ENCODE measurements at regions of chr1 and their contacts with region 1.

Region 1: DNA sequence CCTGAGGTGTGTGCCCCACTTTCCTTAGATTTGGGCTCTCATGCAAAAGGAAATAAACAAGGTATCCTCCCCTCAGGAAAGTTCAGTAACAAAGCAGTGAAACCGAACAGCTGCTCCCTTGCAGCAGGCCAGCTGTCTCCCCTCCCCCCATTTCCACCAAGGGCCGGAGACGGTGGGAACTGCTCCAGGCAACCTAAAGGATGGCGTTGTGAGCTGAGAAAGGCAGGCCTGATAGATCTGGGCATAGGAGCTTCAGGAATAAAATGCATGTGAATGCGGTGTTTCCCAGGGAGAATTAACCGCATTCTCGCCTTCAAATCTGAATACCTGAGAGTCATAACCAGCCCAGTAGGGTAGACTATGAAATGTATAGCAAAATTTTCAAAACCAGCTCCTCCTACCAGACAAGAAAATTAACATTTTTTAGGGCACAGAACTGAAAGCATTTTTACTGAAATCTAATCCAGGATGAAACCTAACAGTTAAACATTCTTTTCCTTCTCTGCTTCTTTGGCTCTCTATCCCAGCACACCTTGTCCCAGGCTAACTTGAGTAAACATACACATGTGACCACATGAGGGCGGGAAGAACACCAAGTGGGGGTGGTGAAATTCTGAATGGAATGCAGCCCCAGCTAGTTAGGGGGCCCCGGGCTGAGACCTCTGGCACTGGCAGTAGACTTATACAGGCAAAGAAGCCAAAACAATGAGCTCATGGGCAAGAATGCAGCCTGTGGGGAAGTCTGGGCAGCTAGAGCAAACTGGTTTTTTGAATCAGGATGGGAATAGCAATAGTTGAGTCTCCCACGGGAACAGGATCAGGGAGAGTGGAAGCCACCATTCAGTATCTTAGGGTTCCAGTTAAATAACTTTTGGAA is 11.5 kb downstream of the MCL1 start:
- DNase-seq: peak; percentile 72
- H3K4me3 Mint-ChIP-seq: peak overlapping the region; percentile 72
- H3K27ac Mint-ChIP-seq: peak overlapping the region; percentile 97
- H3K4me1 Mint-ChIP-seq: peaks cover 91% of the 10 kb centered on the region
- H3K27me3 Mint-ChIP-seq: no peaks in the 10 kb centered on the region

Region 2: GRCh38 chr1:150363426-150364230 is 204.3 kb before region 1 on chr1 and contains the start of gene RPRD2:
- CTCF ChIA-PET with region 1: no interaction called
- POLR2A ChIA-PET with region 1: no interaction called
- DNase-seq: peak; percentile 100
- H3K4me3 Mint-ChIP-seq: peak within 1 kb of the TSS; percentile 97
- H3K27ac Mint-ChIP-seq: peak within 1 kb of the TSS; percentile 98
- H3K4me1 Mint-ChIP-seq: peaks cover 29% of the 10 kb centered on the region
- H3K27me3 Mint-ChIP-seq: no peaks in the 10 kb centered on the region
- total RNA-seq, gene RPRD2: 36.4 to 43.6 TPM

Region 3: GRCh38 chr1:150578965-150579798 is 11.2 kb after region 1 on chr1 and contains the start of gene MCL1:
- CTCF ChIA-PET with region 1: interaction called, 158 read pairs
- POLR2A ChIA-PET with region 1: interaction called, 50 read pairs
- DNase-seq: peak; percentile 93
- H3K4me3 Mint-ChIP-seq: peak within 1 kb of the TSS; percentile 99
- H3K27ac Mint-ChIP-seq: peak within 1 kb of the TSS; percentile 98
- H3K4me1 Mint-ChIP-seq: peaks cover 25% of the 10 kb centered on the region
- H3K27me3 Mint-ChIP-seq: no peaks in the 10 kb centered on the region
- total RNA-seq, gene MCL1: 260 to 311 TPM

Region 4: GRCh38 chr1:150696590-150697524 is 128.9 kb after region 1 on chr1 and contains the start of gene GOLPH3L:
- CTCF ChIA-PET with region 1: no interaction called
- POLR2A ChIA-PET with region 1: no interaction called
- DNase-seq: peak; percentile 97
- H3K4me3 Mint-ChIP-seq: peak within 1 kb of the TSS; percentile 93
- H3K27ac Mint-ChIP-seq: peak within 1 kb of the TSS; percentile 86
- H3K4me1 Mint-ChIP-seq: peaks cover 26% of the 10 kb centered on the region
- H3K27me3 Mint-ChIP-seq: peaks cover 3% of the 10 kb centered on the region
- total RNA-seq, gene GOLPH3L: 24.0 to 27.1 TPM

Region 5: GRCh38 chr1:150813058-150813707 is 245.2 kb after region 1 on chr1:
- CTCF ChIA-PET with region 1: no interaction called
- POLR2A ChIA-PET with region 1: interaction called, 12 read pairs
- DNase-seq: no peak
- H3K4me3 Mint-ChIP-seq: no peak overlapping the region
- H3K27ac Mint-ChIP-seq: no peak overlapping the region
- H3K4me1 Mint-ChIP-seq: peaks cover 3% of the 10 kb centered on the region
- H3K27me3 Mint-ChIP-seq: no peaks in the 10 kb centered on the region

Region 6: DNA sequence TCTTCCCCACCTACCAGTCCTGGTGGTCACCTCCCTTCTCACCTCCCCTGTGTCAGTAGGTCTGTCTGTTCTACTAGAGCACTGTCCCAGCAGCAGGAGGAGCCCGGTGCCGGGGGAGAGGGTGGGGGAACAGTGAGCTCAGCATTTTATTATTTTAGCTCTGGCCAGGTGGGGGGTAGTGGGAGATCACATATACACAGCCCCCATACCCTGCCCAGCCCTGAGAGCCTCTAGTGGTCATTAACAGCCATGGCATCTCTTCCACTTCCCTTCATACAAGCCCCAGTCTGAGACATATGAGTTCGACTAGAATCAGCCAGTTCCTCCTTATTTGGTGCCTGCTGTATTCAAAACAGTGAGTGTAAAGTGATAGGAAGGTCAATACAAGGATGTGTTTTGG is 608.0 kb after region 1 on chr1 and contains the start of gene TMOD4:
- CTCF ChIA-PET with region 1: no interaction called
- POLR2A ChIA-PET with region 1: no interaction called
- DNase-seq: no peak
- H3K4me3 Mint-ChIP-seq: no peak within 1 kb of the TSS
- H3K27ac Mint-ChIP-seq: no peak within 1 kb of the TSS
- H3K4me1 Mint-ChIP-seq: peaks cover 2% of the 10 kb centered on the region
- H3K27me3 Mint-ChIP-seq: no peaks in the 10 kb centered on the region
- total RNA-seq, gene TMOD4: 2.0 to 2.7 TPM